HEK293 (cell line): ENCODE measurements at regions of chr1 and their contacts with region 1.

Region 1: DNA sequence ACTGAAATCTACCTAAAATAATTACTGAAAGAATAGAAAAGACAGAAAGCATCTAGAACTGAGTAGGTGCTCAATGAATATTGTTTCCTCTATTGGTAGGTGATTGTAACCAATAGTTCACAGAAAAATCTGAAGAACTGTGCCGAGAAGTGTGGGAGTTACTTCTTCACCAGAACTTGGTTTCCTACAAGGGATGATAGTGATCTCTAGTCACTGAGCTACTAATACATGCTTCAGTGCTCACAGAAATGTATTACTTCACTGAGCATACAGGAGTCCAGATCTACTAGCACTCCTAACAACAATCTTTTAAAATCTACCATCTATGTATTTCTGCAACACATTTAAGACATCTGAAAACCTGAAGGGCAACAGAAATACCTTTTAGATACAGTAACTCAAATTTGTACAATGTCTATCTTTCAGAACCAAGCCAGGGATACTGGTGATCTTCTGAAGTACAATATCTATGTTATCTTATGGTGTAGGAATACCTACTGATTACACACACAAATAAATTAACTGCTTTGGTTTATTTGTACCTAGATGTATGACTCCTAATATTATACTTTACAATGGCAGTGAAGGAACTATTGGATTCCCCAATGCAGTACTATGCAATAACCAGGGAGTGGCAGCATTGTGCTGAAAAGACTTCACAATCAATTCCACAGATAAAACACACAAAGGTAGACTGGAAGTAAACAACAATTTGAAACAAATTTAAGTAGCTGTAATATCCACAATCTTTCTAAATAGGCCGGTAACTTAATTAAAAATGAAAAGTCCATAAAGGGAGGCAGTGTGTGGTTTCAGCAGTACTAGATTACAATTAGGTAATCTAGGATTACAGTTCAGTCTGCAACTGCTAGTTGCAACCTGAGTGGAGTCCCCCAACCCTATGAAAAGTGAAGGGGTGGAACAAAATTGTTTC is 243.0 kb downstream of the SLC45A1 start:
- H3K4me3 ChIP-seq: no peak overlapping the region
- H3K27ac ChIP-seq: no peak overlapping the region
- H3K4me1 ChIP-seq: no peaks in the 10 kb centered on the region
- CTCF ChIP-seq: peak; percentile 56; the same call in 1 of the 2 replicates

Region 2: DNA sequence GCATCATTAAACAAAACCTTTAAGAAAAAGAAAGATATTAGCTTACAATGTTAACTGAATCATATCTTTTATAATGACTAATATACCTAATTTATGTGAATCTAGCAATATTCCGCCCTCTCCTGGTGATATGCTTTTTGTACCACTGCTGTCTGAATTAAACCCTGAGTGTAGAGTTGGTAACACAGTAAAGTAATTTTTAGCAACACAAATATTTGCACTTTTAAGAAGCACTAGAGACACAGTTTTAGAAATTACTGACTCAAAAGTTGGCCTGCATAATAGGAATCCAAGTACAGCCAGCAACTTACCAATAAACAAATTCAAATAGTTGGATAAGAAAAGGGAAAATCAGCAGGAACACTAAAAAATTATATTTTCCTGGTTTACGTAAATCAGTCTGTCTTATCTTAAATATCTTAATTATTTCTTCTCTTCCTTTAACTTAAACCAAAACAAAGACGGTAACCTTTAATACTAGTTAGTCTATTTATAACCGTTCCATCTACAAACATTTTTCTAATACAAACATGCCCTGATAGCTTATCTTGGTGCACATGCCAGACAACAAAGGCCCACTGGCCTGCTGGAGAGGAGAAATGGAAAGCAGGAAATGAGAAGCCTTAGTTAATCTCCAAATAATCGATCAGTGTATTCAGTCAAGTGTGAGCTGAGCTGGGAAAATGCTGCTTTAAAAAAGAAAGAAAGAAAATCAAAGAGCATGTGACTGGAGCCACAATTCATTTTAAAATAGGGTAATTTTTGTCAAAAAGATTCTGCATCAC is 10.5 kb after region 1 on chr1:
- CTCF ChIA-PET with region 1: interaction called, 24 read pairs
- POLR2A ChIA-PET with region 1: no interaction called
- H3K4me3 ChIP-seq: no peak overlapping the region
- H3K27ac ChIP-seq: no peak overlapping the region
- H3K4me1 ChIP-seq: peaks cover 17% of the 10 kb centered on the region
- CTCF ChIP-seq: no peak

Region 3: GRCh38 chr1:8671306-8671917 is 110.5 kb after region 1 on chr1:
- CTCF ChIA-PET with region 1: interaction called, 77 read pairs
- POLR2A ChIA-PET with region 1: interaction called, 3 read pairs
- H3K4me3 ChIP-seq: no peak overlapping the region
- H3K27ac ChIP-seq: no peak overlapping the region
- H3K4me1 ChIP-seq: peaks cover 35% of the 10 kb centered on the region
- CTCF ChIP-seq: peak; percentile 51; the same call in 1 of the 2 replicates

Region 4: GRCh38 chr1:8702850-8703810 is 142.3 kb after region 1 on chr1:
- CTCF ChIA-PET with region 1: interaction called, 17 read pairs
- POLR2A ChIA-PET with region 1: no interaction called
- H3K4me3 ChIP-seq: peak overlapping the region; percentile 65
- H3K27ac ChIP-seq: peak overlapping the region; percentile 91
- H3K4me1 ChIP-seq: peaks cover 34% of the 10 kb centered on the region
- CTCF ChIP-seq: no peak

Region 5: GRCh38 chr1:8718850-8719361 is 158.0 kb after region 1 on chr1:
- CTCF ChIA-PET with region 1: interaction called, 21 read pairs
- POLR2A ChIA-PET with region 1: no interaction called
- H3K4me3 ChIP-seq: no peak overlapping the region
- H3K27ac ChIP-seq: no peak overlapping the region
- H3K4me1 ChIP-seq: peaks cover 21% of the 10 kb centered on the region
- CTCF ChIP-seq: peak; percentile 27